Activated CD4-positive, alpha-beta T cell treated with anti-CD3 and anti-CD28 coated beads, Interleukin-2, amount 10 ng/mL, durations not matched to agents 24 days and 14 days (primary cell): ENCODE measurements at regions of chr5 and their contacts with region 1.

Region 1: GRCh38 chr5:114361724-114362196 is at the start of gene KCNN2:
- DNase-seq: no peak
- H3K4me3 Mint-ChIP-seq: peak within 1 kb of the TSS; percentile 35
- H3K27ac Mint-ChIP-seq: peak within 1 kb of the TSS; percentile 58
- H3K4me1 Mint-ChIP-seq: no peaks in the 10 kb centered on the region
- H3K27me3 Mint-ChIP-seq: peaks cover 54% of the 10 kb centered on the region
- total RNA-seq, gene KCNN2: not detected in 2 replicates

Region 2: GRCh38 chr5:113749334-113749733 is 612.4 kb before region 1 on chr5:
- intact Hi-C with region 1: no loop called
- DNase-seq: no peak
- H3K4me3 Mint-ChIP-seq: no peak overlapping the region
- H3K27ac Mint-ChIP-seq: no peak overlapping the region
- H3K4me1 Mint-ChIP-seq: no peaks in the 10 kb centered on the region
- H3K27me3 Mint-ChIP-seq: no peaks in the 10 kb centered on the region

Region 3: DNA sequence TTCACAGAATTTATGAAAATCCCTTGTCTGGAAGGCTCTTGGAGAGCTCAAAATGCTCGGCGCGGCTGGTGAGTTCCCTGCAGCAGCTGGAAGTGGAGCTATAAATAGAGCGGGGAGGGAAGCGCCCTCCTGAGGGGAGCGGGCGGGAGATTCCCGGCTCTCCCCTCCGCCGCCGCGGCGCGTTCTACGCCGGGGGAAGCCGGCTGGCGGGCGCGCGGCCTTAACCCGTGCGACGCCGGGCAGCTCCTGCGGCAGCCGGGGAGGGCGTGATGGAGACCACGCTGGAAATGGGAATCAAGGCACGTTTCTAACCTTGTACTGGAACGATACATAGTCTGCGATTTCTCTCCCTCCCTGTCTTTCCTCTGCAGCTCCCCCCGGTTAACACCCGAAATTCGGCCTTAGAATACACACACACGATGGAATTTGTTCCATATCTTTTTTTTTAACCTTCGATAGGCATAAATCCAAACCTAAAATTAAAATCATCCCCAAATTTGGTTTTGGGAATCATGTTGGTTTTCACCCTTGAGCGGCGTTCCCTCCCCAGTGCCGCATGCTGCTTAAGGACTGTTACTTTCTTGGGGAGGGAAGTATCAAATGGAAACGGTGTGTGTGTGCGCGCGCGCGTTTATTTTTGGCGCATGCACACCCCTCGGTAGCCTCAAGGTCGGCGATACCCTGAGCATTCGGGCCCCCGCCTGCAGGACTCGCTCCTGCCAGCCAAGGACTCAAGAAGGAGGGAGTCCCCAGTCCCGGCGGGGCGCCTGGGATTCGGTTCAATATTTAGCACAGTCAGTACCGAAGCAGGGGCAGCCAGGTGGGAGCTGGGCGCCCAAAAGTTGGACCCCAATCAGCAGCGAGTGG is 306.2 kb before region 1 on chr5:
- intact Hi-C with region 1: loop called (anchors 10 kb)
- DNase-seq: no peak
- H3K4me3 Mint-ChIP-seq: no peak overlapping the region
- H3K27ac Mint-ChIP-seq: no peak overlapping the region
- H3K4me1 Mint-ChIP-seq: no peaks in the 10 kb centered on the region
- H3K27me3 Mint-ChIP-seq: peaks cover 35% of the 10 kb centered on the region